ENCODE measurements at regions of chr17 and their contacts with region 1.

Region 1: DNA sequence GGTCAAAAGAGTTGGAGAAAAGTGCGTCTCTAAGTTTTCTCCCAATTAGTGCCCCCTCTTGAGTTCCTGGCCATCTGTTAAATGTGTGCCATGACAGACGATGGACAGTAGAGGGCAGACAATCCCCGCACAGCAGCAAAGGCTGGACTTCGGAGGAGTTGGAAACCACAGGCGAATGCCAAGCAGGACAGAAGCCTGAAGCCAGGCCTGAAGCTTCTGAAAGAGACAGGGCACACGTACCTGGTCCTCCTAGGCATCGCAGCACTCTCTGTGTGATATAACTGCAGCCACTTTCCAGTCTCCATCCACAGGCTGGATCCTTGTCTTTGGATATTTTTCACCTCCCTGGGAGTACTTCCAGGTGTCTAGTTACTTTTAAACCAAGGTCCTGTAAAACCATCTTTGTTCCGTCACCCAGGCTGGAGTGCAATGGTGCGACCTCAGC is 14.5 kb downstream of the C17orf100 start:
- DNase-seq: peak; percentile 54 to 74 (median 62)
- ATAC-seq: peak; percentile 93
- H3K4me3 ChIP-seq: no peak overlapping the region
- H3K27ac ChIP-seq: no peak overlapping the region
- H3K4me1 ChIP-seq: no peaks in the 10 kb centered on the region
- H3K27me3 ChIP-seq: peaks cover 6 to 36% of the 10 kb centered on the region in 2 experiments; a peak in 4 of 5 replicates
- CTCF ChIP-seq: peak; percentile 85 to 86 (median 85)
- EP300 ChIP-seq: no peak
- POLR2A ChIP-seq: no peak
- RAD21 ChIP-seq: peak; percentile 70 to 82

Region 2: DNA sequence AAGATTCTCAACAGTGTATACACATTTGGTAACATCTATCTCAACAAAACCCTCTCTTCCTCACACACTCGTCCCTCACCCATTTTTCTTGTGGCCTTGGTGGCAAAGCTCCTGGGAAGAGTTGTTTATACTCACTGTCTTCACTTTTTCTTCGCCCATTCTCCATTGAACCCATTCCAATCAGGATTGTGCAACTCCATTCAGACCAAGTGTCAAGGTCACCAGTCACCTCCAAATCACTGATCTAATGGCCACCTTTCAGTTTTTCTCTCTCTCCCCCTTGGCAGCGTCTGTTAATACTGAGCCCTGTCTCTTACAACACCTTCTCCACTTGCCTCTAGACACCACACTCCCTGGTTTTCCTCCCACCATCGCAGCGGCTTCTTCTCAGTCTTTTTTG is 55.6 kb after region 1 on chr17:
- CTCF ChIA-PET with region 1: no interaction called
- POLR2A ChIA-PET with region 1: no interaction called
- in situ Hi-C with region 1: no loop called
- intact Hi-C with region 1: no loop called
- DNase-seq: no peak
- ATAC-seq: no peak
- H3K4me3 ChIP-seq: no peak overlapping the region
- H3K27ac ChIP-seq: no peak overlapping the region
- H3K4me1 ChIP-seq: no peaks in the 10 kb centered on the region
- H3K27me3 ChIP-seq: peaks cover 3 to 17% of the 10 kb centered on the region in 2 experiments; a peak in 4 of 5 replicates
- CTCF ChIP-seq: no peak
- EP300 ChIP-seq: no peak
- POLR2A ChIP-seq: no peak
- RAD21 ChIP-seq: no peak

Region 3: GRCh38 chr17:7004398-7005253 is 338.5 kb after region 1 on chr17:
- CTCF ChIA-PET with region 1: interaction called, 4 read pairs
- POLR2A ChIA-PET with region 1: no interaction called
- in situ Hi-C with region 1: loop called (anchors 5 kb)
- intact Hi-C with region 1: no loop called
- DNase-seq: peak; percentile 41 to 69 (median 48)
- ATAC-seq: peak; percentile 84
- H3K4me3 ChIP-seq: no peak overlapping the region
- H3K27ac ChIP-seq: no peak overlapping the region
- H3K4me1 ChIP-seq: peaks cover 6% of the 10 kb centered on the region in 2 experiments; a peak in 4 of 5 replicates
- H3K27me3 ChIP-seq: no peaks in the 10 kb centered on the region
- CTCF ChIP-seq: peak; percentile 70 to 80 (median 72)
- EP300 ChIP-seq: no peak
- POLR2A ChIP-seq: no peak
- RAD21 ChIP-seq: peak; percentile 79 to 88

Region 4: GRCh38 chr17:7014261-7014994 is 348.3 kb after region 1 on chr17:
- CTCF ChIA-PET with region 1: no interaction called
- POLR2A ChIA-PET with region 1: no interaction called
- in situ Hi-C with region 1: loop called (anchors 5 kb)
- intact Hi-C with region 1: loop called (anchors 5 kb)
- DNase-seq: peak; percentile 82 to 95 (median 86)
- ATAC-seq: peak; percentile 92
- H3K4me3 ChIP-seq: peak overlapping the region; percentile 81
- H3K27ac ChIP-seq: peak overlapping the region; percentile 96
- H3K4me1 ChIP-seq: peaks cover 39 to 50% of the 10 kb centered on the region in 2 experiments
- H3K27me3 ChIP-seq: no peaks in the 10 kb centered on the region
- CTCF ChIP-seq: peak in 2 of 3 experiments; percentile 63 to 74; a peak in 5 of 6 replicates
- EP300 ChIP-seq: no peak
- POLR2A ChIP-seq: peak; percentile 88
- RAD21 ChIP-seq: peak in 1 of 2 experiments; percentile 23; a peak in 2 of 4 replicates

Measured in K562 (cell line).